Caco-2 (cell line): ENCODE measurements at regions of chr11 and their contacts with region 1.

Region 1: GRCh38 chr11:114180301-114181055 is 115.7 kb upstream of the NNMT start:
- DNase-seq: peak; percentile 64 to 73
- H3K4me3 ChIP-seq: no peak overlapping the region
- H3K4me3 Mint-ChIP-seq: no peak overlapping the region
- H3K27ac Mint-ChIP-seq: no peak overlapping the region
- H3K4me1 ChIP-seq: peaks cover 22% of the 10 kb centered on the region
- H3K4me1 Mint-ChIP-seq: peaks cover 25% of the 10 kb centered on the region
- H3K27me3 ChIP-seq: no peaks in the 10 kb centered on the region
- H3K27me3 Mint-ChIP-seq: no peaks in the 10 kb centered on the region
- CTCF ChIP-seq: peak; percentile 80 to 91

Region 2: GRCh38 chr11:114059278-114059983 is 121.0 kb before region 1 on chr11 and contains the start of gene ZBTB16:
- CTCF ChIA-PET with region 1: interaction called, 7 read pairs
- POLR2A ChIA-PET with region 1: no interaction called
- intact Hi-C with region 1: loop called (anchors 1 kb)
- DNase-seq: peak; percentile 83 to 88
- H3K4me3 ChIP-seq: peak within 1 kb of the TSS; percentile 78
- H3K4me3 Mint-ChIP-seq: peak within 1 kb of the TSS; percentile 86
- H3K27ac Mint-ChIP-seq: peak within 1 kb of the TSS; percentile 74
- H3K4me1 ChIP-seq: peaks cover 10% of the 10 kb centered on the region; the same call in 1 of the 2 replicates
- H3K4me1 Mint-ChIP-seq: peaks cover 16% of the 10 kb centered on the region
- H3K27me3 ChIP-seq: no peaks in the 10 kb centered on the region
- H3K27me3 Mint-ChIP-seq: peaks cover 11% of the 10 kb centered on the region
- CTCF ChIP-seq: peak in 1 of 2 experiments; percentile 78
- total RNA-seq, gene ZBTB16: 10.6 and 12.7 TPM in 2 replicates

Region 3: DNA sequence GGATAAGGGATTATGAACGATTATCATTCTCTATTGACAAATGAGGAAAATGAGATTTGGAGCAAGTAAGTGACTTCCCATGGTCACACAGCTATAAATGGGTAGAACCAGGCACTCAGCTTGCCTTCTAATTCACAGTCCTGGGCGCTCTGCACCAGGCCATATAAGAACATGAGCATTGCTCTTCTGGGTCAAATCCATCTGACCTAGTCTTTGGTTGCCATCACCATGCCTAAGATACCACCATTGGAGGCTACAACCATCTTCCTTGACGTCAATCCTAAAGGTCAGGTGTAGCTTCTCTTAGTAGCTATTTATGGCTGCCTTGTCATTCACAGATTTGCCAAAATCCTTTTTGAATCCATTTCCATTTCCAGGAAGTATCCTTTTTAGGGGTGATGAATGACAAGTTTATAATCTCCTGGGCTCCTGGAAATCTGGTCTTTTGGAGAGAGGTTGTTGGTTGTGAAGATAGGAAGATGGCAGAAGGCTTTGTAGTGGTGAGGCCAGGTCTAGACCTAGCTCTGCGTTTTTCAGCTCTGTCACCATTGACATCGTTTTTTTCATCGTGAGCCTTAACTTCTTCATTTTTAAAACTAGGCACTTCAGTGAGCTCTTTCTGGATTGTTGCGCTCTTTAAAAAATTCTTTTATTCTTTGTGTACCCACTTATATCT is 109.9 kb before region 1 on chr11:
- CTCF ChIA-PET with region 1: no interaction called
- POLR2A ChIA-PET with region 1: no interaction called
- intact Hi-C with region 1: no loop called
- DNase-seq: no peak
- H3K4me3 ChIP-seq: no peak overlapping the region
- H3K4me3 Mint-ChIP-seq: no peak overlapping the region
- H3K27ac Mint-ChIP-seq: no peak overlapping the region
- H3K4me1 ChIP-seq: no peaks in the 10 kb centered on the region
- H3K4me1 Mint-ChIP-seq: peaks cover under 1% of the 10 kb centered on the region
- H3K27me3 ChIP-seq: no peaks in the 10 kb centered on the region
- H3K27me3 Mint-ChIP-seq: no peaks in the 10 kb centered on the region
- CTCF ChIP-seq: no peak

Region 4: DNA sequence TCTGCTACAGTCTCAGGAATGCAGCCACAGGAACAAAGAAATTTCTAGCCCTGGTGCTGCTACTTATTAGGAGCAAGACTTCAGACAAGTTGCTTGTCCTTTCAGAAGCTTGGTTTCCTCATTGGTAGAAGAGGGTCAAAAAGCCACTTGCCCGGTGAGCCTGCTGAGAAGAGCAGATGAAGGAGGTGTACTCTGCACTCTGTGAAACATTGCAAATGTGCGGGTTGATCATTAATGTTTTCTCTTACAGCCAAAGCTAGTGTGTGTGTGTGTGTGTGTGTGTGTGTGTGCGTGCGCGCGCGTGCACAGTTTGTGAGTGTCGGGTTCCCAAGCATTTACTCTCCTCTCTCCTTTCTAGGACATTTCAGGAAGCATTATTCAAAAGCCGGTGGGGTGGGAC is 29.4 kb after region 1 on chr11:
- CTCF ChIA-PET with region 1: interaction called, 4 read pairs
- POLR2A ChIA-PET with region 1: no interaction called
- intact Hi-C with region 1: loop called (anchors 1 kb)
- DNase-seq: peak; percentile 90 to 93
- H3K4me3 ChIP-seq: 0 out of 2 replicates have a peak overlapping the region, but pooled peaks have one; percentile 9
- H3K4me3 Mint-ChIP-seq: peak overlapping the region; percentile 68
- H3K27ac Mint-ChIP-seq: peak overlapping the region; percentile 71
- H3K4me1 ChIP-seq: peaks cover 53% of the 10 kb centered on the region
- H3K4me1 Mint-ChIP-seq: peaks cover 34% of the 10 kb centered on the region
- H3K27me3 ChIP-seq: no peaks in the 10 kb centered on the region
- H3K27me3 Mint-ChIP-seq: no peaks in the 10 kb centered on the region
- CTCF ChIP-seq: no peak